ENCODE measurements at regions of chr11 and their contacts with region 1.

Region 1: DNA sequence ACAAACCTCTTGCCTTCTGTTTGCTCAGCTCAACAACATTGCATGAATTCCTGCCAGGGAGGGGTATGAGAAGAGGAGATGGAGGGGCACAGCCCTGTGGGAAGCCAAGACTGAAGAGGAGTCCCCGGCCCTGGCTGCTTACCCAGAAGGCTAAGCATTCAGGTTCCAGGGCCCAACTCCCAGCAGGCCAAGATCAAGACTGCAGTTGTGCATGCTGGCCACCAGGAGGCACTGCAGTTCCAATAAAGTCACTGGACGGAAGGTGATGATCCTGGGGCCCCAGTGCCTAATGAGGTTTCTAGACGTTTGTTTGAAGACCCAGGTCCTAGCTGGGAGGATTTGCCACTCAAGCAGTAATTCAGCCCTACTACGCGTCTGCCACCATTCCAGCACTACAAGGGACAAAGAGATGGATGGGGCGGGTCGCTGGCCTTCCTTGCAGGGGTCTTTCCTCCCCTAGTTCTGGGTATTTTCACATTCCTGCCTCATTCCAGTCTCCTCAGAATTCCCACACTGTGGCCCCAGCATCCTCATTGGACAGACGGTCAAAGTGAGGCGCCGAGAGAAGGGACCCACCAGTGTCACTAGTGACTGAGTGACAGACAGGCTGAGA is 23.6 kb downstream of the ALX4 start:
- DNase-seq: peak; percentile 77
- H3K4me3 Mint-ChIP-seq: no peak overlapping the region
- H3K27ac Mint-ChIP-seq: no peak overlapping the region
- H3K4me1 Mint-ChIP-seq: no peaks in the 10 kb centered on the region
- H3K27me3 Mint-ChIP-seq: no peaks in the 10 kb centered on the region

Region 2: DNA sequence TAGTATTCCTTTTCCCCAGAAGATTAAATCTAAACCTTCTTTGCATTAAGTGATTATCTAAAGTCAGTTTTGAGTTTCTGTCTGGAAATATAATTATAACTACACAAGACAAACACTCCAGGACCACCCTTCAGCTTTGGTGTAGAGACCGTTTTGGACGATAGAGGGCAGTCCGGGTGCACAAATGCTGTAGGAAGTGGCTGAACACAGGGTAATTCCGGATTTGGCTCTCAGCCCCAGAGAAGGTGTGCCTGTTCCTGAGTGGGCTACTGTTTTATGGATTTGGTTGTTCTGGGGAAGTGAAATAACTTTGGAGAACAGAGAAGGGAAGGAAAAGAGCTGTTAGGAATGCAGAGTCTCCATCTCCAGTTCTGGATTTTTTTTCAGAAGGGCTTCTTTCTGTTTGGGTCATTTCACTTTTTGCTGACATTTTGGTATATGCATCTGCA is 176.1 kb before region 1 on chr11:
- CTCF ChIA-PET with region 1: interaction called, 4 read pairs
- intact Hi-C with region 1: loop called (anchors 1 kb)
- DNase-seq: peak; percentile 76
- H3K4me3 Mint-ChIP-seq: no peak overlapping the region
- H3K27ac Mint-ChIP-seq: no peak overlapping the region
- H3K4me1 Mint-ChIP-seq: peaks cover 10% of the 10 kb centered on the region
- H3K27me3 Mint-ChIP-seq: no peaks in the 10 kb centered on the region

Region 3: DNA sequence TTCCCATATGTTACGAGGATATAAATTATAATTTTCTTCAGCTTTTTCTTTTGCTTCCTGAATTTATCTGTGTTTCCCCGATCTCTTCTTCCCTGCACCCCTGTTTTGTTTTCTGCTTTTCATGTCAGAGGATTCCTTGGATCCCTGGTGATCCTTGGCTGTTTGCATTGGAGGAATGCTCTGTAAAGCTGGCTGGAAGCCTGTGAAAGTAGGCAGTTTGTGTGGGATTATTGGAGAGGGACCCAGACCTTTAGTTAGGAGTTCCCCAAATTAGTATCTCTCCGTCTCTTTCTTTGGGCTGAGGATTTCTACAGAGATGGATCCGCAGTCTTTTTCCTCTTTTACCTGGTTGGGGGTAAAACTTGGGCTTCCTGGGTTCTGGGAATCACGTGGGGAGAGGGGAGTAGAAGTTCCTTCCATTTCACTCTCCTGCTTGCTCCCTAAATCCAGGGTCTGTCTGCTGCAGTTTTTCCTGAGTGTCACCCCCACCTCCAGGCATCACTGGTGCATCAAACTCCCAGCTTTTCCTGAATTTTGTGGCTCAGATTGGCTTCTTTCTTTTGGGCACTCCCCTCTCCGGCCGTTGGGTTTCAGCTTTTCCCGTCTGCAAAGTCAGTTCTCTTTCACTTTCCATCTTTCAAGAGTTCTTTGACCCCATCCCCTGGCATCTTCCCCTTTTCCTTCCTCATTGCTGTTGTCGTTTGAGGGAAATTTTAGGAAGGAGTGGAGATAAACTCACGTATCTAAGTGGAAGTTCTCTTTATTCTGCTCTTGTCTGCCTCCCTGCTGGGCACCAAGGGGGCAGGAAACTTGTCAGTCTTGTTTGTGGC is 102.7 kb after region 1 on chr11:
- CTCF ChIA-PET with region 1: no interaction called
- intact Hi-C with region 1: no loop called
- DNase-seq: no peak
- H3K4me3 Mint-ChIP-seq: no peak overlapping the region
- H3K27ac Mint-ChIP-seq: no peak overlapping the region
- H3K4me1 Mint-ChIP-seq: no peaks in the 10 kb centered on the region
- H3K27me3 Mint-ChIP-seq: peaks cover 29% of the 10 kb centered on the region

Measured in activated naive CD4-positive, alpha-beta T cell treated with anti-CD3 and anti-CD28 coated beads for 36 hours (primary cell).